CD4-positive, alpha-beta T cell (primary cell): ENCODE measurements at regions of chr2 and their contacts with region 1.

Region 1: GRCh38 chr2:189096769-189097447 is 82.7 kb downstream of the COL5A2 start:
- DNase-seq: no peak
- ATAC-seq: no peak
- H3K4me3 ChIP-seq: no peak overlapping the region
- H3K4me3 Mint-ChIP-seq: no peak overlapping the region
- H3K27ac ChIP-seq: no peak overlapping the region
- H3K27ac Mint-ChIP-seq: no peak overlapping the region
- H3K4me1 ChIP-seq: no peaks in the 10 kb centered on the region
- H3K4me1 Mint-ChIP-seq: no peaks in the 10 kb centered on the region
- H3K27me3 ChIP-seq: no peaks in the 10 kb centered on the region
- H3K27me3 Mint-ChIP-seq: no peaks in the 10 kb centered on the region
- CTCF ChIP-seq: no peak

Region 2: GRCh38 chr2:187819624-187820023 is 1277.3 kb before region 1 on chr2:
- CTCF ChIA-PET with region 1: no interaction called
- POLR2A ChIA-PET with region 1: no interaction called
- intact Hi-C with region 1: no loop called
- DNase-seq: no peak
- ATAC-seq: no peak
- H3K4me3 ChIP-seq: no peak overlapping the region
- H3K4me3 Mint-ChIP-seq: no peak overlapping the region
- H3K27ac ChIP-seq: no peak overlapping the region
- H3K27ac Mint-ChIP-seq: no peak overlapping the region
- H3K4me1 ChIP-seq: no peaks in the 10 kb centered on the region
- H3K4me1 Mint-ChIP-seq: no peaks in the 10 kb centered on the region
- H3K27me3 ChIP-seq: no peaks in the 10 kb centered on the region
- H3K27me3 Mint-ChIP-seq: no peaks in the 10 kb centered on the region
- CTCF ChIP-seq: no peak

Region 3: GRCh38 chr2:189221853-189222772 is 125.2 kb after region 1 on chr2:
- CTCF ChIA-PET with region 1: no interaction called
- POLR2A ChIA-PET with region 1: no interaction called
- intact Hi-C with region 1: no loop called
- DNase-seq: no peak
- ATAC-seq: no peak
- H3K4me3 ChIP-seq: no peak overlapping the region
- H3K4me3 Mint-ChIP-seq: no peak overlapping the region
- H3K27ac ChIP-seq: no peak overlapping the region
- H3K27ac Mint-ChIP-seq: no peak overlapping the region
- H3K4me1 ChIP-seq: no peaks in the 10 kb centered on the region
- H3K4me1 Mint-ChIP-seq: peaks cover 12% of the 10 kb centered on the region
- H3K27me3 ChIP-seq: no peaks in the 10 kb centered on the region
- H3K27me3 Mint-ChIP-seq: no peaks in the 10 kb centered on the region
- CTCF ChIP-seq: no peak

Region 4: GRCh38 chr2:189287982-189288521 is 191.1 kb after region 1 on chr2:
- CTCF ChIA-PET with region 1: no interaction called
- POLR2A ChIA-PET with region 1: no interaction called
- intact Hi-C with region 1: loop called in 1 of 2 experiments (anchors 5 kb)
- DNase-seq: peak in 3 of 14 experiments; percentile 37 to 47 (median 47)
- ATAC-seq: peak; percentile 56
- H3K4me3 ChIP-seq: no peak overlapping the region
- H3K4me3 Mint-ChIP-seq: no peak overlapping the region
- H3K27ac ChIP-seq: no peak overlapping the region
- H3K27ac Mint-ChIP-seq: no peak overlapping the region
- H3K4me1 ChIP-seq: no peaks in the 10 kb centered on the region
- H3K4me1 Mint-ChIP-seq: peaks cover 15% of the 10 kb centered on the region
- H3K27me3 ChIP-seq: no peaks in the 10 kb centered on the region
- H3K27me3 Mint-ChIP-seq: no peaks in the 10 kb centered on the region
- CTCF ChIP-seq: peak; percentile 46

Region 5: DNA sequence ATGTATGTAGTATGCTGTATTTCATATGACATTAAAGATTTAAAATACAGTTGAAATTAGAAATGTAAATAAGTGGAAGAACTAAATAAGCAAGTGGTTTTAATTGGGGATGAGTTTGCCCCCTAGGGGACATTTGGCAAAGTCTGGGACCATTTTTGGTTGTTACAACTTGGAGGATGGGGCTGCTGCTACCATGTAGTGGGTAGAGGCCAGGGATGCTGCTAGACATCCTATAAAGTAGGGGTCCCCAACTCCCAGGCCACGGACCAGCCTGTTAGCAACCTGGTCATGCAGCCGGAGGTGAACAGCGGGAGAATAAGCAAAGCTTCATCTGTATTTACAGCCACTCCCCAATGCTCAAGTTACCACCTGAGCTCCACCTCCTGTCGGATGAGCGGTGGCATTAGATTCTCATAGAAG is 536.5 kb after region 1 on chr2:
- CTCF ChIA-PET with region 1: no interaction called
- POLR2A ChIA-PET with region 1: no interaction called
- intact Hi-C with region 1: loop called in 1 of 2 experiments (anchors 10 kb)
- DNase-seq: peak in 6 of 14 experiments; percentile 5 to 50 (median 46)
- ATAC-seq: peak; percentile 51
- H3K4me3 ChIP-seq: no peak overlapping the region
- H3K4me3 Mint-ChIP-seq: no peak overlapping the region
- H3K27ac ChIP-seq: no peak overlapping the region
- H3K27ac Mint-ChIP-seq: no peak overlapping the region
- H3K4me1 ChIP-seq: no peaks in the 10 kb centered on the region
- H3K4me1 Mint-ChIP-seq: no peaks in the 10 kb centered on the region
- H3K27me3 ChIP-seq: no peaks in the 10 kb centered on the region
- H3K27me3 Mint-ChIP-seq: no peaks in the 10 kb centered on the region
- CTCF ChIP-seq: peak; percentile 54

Region 6: GRCh38 chr2:190382851-190383250 is 1285.9 kb after region 1 on chr2:
- CTCF ChIA-PET with region 1: no interaction called
- POLR2A ChIA-PET with region 1: no interaction called
- intact Hi-C with region 1: no loop called
- DNase-seq: peak in 8 of 14 experiments; percentile 8 to 81 (median 39)
- ATAC-seq: peak; percentile 94
- H3K4me3 ChIP-seq: no peak overlapping the region
- H3K4me3 Mint-ChIP-seq: no peak overlapping the region
- H3K27ac ChIP-seq: no peak overlapping the region
- H3K27ac Mint-ChIP-seq: no peak overlapping the region
- H3K4me1 ChIP-seq: no peaks in the 10 kb centered on the region
- H3K4me1 Mint-ChIP-seq: peaks cover 4% of the 10 kb centered on the region
- H3K27me3 ChIP-seq: no peaks in the 10 kb centered on the region
- H3K27me3 Mint-ChIP-seq: no peaks in the 10 kb centered on the region
- CTCF ChIP-seq: peak; percentile 68